Dendritic cell treated with granulocyte-macrophage colony-stimulating factor and Interleukin-4, amounts not matched to agents 40 ng/mL and 50 ng/mL, for 4 days (primary cell): ENCODE measurements at regions of chr11 and their contacts with region 1.

Region 1: DNA sequence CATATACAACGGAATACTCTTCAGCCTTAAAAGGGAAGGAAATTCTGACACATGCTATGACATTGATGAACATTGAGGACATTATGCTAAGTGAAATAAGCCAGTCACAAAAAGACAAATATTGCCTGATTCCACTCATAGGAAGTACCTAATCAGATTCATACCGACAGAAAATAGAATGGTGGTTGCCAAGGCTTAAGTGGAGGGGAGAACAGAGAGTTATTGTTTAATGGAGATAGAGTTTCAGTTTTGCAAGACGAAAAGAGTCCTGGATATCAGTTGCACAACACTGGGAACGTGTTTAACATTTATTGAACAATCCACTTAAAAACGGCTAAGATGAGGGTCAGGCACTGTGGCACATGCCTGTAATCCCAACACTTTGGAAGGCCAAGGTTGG is 45.6 kb upstream of the HIPK3 start:
- H3K4me3 Mint-ChIP-seq: peak overlapping the region; percentile 30
- H3K27ac Mint-ChIP-seq: peak overlapping the region; percentile 88
- H3K4me1 Mint-ChIP-seq: peaks cover 50% of the 10 kb centered on the region
- H3K27me3 Mint-ChIP-seq: no peaks in the 10 kb centered on the region

Region 2: GRCh38 chr11:33179348-33179803 is 32.2 kb before region 1 on chr11:
- intact Hi-C with region 1: loop called (anchors 5 kb)
- H3K4me3 Mint-ChIP-seq: no peak overlapping the region
- H3K27ac Mint-ChIP-seq: peak overlapping the region; percentile 82
- H3K4me1 Mint-ChIP-seq: peaks cover 34% of the 10 kb centered on the region
- H3K27me3 Mint-ChIP-seq: no peaks in the 10 kb centered on the region

Region 3: DNA sequence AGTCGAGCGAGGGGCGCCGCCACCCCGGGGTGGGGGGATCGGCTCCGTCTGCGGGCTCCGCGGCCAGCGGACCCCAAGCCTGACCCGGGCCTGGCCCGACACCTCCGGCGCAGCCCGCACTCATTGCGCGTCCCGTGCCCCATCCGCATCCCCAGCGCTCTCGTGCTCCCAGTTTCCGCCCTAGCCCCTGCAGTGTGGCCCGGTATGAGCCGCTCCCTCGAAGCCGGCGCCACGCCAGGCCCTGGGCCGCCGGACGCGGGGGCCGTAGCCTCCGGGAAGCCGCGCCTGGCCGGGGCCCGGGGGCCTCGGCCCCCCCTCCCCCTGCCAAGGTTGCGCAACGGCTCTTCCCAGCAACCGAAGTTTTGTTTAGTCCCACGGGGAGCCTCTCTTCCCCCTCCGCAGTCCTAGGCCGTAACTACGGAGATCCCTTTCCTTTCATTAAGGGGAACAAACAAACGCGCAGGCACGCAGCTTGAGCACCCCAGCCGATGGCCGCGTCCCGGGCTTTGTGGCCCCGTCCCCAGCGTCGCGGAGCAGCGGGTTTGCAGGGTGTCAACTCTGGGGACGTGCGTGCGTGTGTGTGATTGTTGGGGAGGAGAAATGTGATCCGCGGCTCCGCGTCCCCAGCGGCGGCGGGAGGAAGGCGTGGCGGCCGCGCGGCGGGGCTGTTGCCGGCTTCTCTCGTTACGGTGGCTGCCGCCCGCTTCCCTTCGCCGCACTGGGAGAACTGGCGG is 46.5 kb after region 1 on chr11:
- intact Hi-C with region 1: loop called (anchors 5 kb)
- H3K4me3 Mint-ChIP-seq: peak overlapping the region; percentile 88
- H3K27ac Mint-ChIP-seq: peak overlapping the region; percentile 93
- H3K4me1 Mint-ChIP-seq: peaks cover 51% of the 10 kb centered on the region
- H3K27me3 Mint-ChIP-seq: no peaks in the 10 kb centered on the region

Region 4: GRCh38 chr11:33324302-33324985 is 112.9 kb after region 1 on chr11:
- intact Hi-C with region 1: no loop called
- H3K4me3 Mint-ChIP-seq: no peak overlapping the region
- H3K27ac Mint-ChIP-seq: peak overlapping the region; percentile 2
- H3K4me1 Mint-ChIP-seq: peaks cover 32% of the 10 kb centered on the region
- H3K27me3 Mint-ChIP-seq: no peaks in the 10 kb centered on the region